Left cardiac atrium (tissue), 4 donors: ENCODE measurements at regions of chr21 and their contacts with region 1.

Region 1: DNA sequence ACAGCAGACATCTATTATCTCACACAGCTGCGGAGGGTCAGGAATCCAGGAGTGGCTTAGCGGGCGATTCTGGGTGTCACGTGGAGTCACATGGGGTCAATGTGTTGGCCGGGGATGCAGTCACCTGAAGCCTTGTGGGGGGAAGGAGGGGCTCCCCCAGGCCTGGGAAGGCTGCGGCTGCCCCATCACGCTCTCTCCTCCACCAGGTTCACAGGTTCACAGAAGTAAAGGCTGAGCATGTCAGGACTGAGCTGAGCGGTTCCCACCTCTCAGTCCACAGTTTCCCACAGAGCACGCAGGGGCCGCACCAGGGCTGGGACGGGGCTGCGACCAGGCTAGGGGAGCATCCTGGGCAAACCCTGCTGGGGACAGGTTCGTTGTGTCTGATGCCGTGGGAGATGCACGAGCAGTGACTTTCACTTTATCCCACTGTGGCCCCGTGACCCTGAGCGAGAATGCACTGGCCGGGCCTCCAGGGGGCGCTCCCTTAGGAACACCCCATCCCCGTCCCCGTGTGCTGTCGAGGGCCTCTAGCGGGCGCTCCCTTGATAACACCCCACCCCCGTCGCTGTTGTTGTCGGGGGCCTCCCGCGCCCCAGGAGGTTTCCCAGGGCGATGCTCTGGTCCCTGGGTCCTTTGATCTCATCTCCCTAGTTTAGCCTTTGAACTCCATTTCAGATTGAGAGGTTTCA is 73.2 kb upstream of the TRAPPC10 start:
- DNase-seq: peak; percentile 84
- ATAC-seq: peak; percentile 84 to 92

Region 2: DNA sequence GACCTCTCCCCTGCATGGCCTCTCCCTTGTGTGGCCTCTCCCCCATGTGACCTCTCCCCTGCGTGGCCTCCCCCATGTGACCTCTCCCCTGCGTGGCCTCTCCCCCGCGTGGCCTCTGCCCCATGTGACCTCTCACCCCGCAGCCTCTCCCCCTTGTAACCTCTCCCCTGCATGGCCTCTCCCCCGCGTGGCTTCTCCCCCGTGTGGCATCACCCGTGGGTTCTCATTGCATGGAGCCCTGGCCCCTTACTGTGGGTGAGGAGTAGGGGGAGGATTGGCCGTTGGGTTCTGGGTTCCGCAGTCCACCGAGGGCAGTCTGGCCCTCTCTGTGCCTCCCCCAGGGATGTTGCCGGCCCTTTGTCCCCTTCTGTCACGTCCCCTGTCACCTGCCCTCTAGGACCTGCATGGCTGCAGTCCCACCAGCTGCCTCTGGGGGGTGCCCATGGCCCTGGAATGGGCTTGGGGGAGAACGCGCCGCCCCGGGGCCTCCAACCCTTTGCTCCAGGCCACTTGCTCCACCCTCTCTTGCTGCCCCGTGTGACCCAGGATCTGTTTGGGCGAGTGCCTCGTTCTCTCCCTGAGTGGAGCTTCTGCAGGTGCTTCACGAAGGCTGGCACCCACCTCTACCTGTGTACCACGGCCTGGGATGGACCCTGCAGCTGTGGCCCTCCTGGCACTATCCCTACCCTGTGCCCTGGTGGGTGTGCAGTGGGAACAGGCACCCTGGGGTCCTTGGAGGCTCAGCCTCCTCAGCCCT is 128.2 kb before region 1 on chr21:
- intact Hi-C with region 1: loop called in 1 of 2 experiments (anchors 5 kb)
- DNase-seq: peak; percentile 86
- ATAC-seq: peak; percentile 71 to 75

Region 3: GRCh38 chr21:43884012-43884860 is 54.7 kb before region 1 on chr21:
- intact Hi-C with region 1: no loop called
- DNase-seq: peak; percentile 42
- ATAC-seq: peak; percentile 53 to 68

Region 4: DNA sequence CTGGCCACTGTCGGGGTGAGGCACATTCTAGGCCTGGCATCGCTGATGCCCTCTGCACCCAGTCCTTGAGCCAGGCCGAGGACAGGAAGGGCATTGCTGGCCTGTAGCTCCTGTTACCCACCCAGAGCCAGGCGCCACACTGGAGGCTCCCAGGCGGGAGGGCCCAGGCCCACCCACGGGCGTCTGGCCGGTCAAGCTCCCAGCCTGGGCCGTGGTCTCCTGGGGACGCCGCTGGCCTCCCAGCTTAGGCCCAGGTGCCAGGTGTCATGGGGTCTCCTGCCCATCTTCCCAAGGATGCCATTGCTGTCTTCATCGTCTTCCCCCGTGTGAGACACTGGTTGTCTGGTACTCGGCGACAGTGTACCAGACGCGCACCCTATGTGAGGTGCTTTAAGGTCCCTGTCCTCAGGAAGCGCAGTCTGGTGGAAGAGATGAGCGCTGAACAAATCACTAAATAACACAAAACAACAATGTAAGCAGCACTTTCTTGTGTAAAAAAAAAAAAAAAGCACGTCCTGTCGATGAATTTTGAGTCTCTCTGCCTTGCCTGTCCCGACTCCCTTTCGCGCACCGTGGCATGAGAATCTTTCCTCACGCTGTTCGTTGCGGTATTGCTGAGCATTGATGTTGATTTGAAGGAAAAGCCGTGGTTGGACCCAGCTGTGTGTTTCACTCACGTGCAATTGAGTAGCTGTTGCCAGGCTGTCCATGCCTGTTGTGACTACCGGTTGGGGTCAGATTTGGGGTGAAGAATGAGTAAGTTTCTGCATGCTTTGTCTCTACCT is 46.2 kb after region 1 on chr21:
- intact Hi-C with region 1: no loop called
- DNase-seq: no peak
- ATAC-seq: no peak

Region 5: DNA sequence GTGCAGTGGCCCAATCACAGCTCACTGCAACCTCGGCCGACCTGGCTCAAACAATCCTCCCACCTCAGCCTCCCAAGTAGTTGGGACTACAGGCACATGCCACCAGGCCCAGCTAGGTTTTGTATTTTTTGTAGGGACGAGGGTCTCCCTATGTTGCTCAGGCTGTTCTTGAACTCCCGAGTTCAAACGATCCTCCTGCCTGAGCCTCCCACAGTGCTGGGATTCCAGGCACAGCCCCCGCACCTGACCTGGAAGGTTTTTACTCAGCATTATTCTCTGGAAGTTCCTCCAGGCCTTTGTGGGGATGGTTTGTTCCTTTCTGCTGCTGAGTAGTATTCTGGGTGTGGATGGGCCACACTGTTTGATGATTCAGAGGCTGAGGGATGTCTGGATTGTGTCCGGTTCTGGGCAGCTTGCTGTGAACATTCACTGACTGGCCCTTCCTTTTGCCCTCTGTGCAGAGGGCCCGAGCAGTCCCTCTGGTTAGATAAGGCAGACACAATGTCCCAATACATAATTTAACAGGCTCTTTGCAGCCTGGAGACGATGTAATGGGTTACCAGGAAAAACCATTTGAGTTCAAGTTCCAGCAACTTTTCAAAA is 67.2 kb after region 1 on chr21:
- intact Hi-C with region 1: loop called in 1 of 2 experiments (anchors 10 kb)
- DNase-seq: peak; percentile 69
- ATAC-seq: peak; percentile 86 to 95